ENCODE measurements at regions of chr16 and their contacts with region 1.

Region 1: GRCh38 chr16:56317998-56318826 is 107.1 kb downstream of the AMFR start:
- DNase-seq: peak; percentile 51
- ATAC-seq: peak; percentile 99
- H3K4me3 ChIP-seq: no peak overlapping the region
- H3K27ac ChIP-seq: no peak overlapping the region
- H3K4me1 ChIP-seq: peaks cover 4 to 5% of the 10 kb centered on the region in 2 experiments
- H3K27me3 ChIP-seq: no peaks in the 10 kb centered on the region
- CTCF ChIP-seq: peak; percentile 74 to 91 (median 86)
- POLR2A ChIP-seq: no peak
- RAD21 ChIP-seq: peak; percentile 92

Region 2: DNA sequence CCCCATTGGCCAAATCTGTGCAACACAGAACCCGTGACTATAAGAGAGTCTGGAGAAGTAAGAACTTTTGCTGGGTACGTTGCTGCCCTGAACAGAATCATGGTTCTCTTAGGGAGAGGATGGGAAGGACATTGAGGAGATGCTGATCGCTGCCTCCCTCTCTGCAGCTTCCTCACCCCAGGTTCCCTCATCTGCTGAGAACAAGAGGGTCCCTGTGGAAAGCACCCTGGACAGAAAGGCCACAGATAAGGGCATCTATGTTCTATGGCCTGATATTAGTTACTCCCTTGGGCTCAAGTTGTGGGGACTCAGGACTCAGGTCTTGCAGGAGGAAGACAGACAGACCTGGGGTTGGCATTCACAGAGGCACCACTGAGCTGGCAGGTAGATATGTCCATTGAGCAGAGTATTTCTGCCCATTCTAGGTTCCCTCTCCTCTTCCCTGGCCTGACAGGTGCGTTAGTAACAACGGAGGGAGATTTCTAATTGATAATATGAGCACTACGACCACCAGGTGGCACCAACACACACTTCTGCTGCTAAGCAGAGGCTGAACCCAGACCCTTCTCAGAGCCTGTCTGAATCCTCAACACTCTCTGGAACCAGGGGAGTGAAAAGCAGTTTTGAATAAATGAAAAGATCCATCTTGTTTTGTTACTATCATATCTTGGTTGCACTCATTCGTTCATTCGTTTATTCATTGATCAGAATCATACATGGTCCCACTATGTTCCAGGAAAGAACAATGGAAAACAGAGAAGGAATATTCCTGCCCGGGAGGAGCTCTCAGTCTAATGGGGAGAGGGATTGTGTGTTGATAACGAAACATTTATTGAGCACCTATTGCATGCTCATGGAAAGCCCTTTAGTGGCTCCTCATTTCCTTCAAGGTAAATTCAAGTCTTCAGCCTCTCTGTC is 606.0 kb before region 1 on chr16:
- CTCF ChIA-PET with region 1: interaction called, 4 read pairs
- POLR2A ChIA-PET with region 1: no interaction called
- RAD21 ChIA-PET with region 1: no interaction called
- intact Hi-C with region 1: loop called (anchors 1 kb)
- DNase-seq: peak; percentile 31
- ATAC-seq: peak; percentile 92
- H3K4me3 ChIP-seq: no peak overlapping the region
- H3K27ac ChIP-seq: no peak overlapping the region
- H3K4me1 ChIP-seq: no peaks in the 10 kb centered on the region
- H3K27me3 ChIP-seq: peaks cover 47% of the 10 kb centered on the region
- CTCF ChIP-seq: peak; percentile 47 to 68 (median 54); a peak in 5 of 6 replicates
- POLR2A ChIP-seq: no peak
- RAD21 ChIP-seq: peak; percentile 71

Region 3: GRCh38 chr16:55944377-55944802 is 373.8 kb before region 1 on chr16:
- CTCF ChIA-PET with region 1: interaction called, 17 read pairs
- POLR2A ChIA-PET with region 1: no interaction called
- RAD21 ChIA-PET with region 1: interaction called in 1 of 2 experiments, 3 read pairs
- intact Hi-C with region 1: loop called (anchors 1 kb)
- DNase-seq: peak; percentile 23
- ATAC-seq: peak; percentile 95
- H3K4me3 ChIP-seq: no peak overlapping the region
- H3K27ac ChIP-seq: no peak overlapping the region
- H3K4me1 ChIP-seq: no peaks in the 10 kb centered on the region
- H3K27me3 ChIP-seq: peaks cover 18% of the 10 kb centered on the region
- CTCF ChIP-seq: peak; percentile 57 to 95 (median 94)
- POLR2A ChIP-seq: no peak
- RAD21 ChIP-seq: peak; percentile 61

Region 4: DNA sequence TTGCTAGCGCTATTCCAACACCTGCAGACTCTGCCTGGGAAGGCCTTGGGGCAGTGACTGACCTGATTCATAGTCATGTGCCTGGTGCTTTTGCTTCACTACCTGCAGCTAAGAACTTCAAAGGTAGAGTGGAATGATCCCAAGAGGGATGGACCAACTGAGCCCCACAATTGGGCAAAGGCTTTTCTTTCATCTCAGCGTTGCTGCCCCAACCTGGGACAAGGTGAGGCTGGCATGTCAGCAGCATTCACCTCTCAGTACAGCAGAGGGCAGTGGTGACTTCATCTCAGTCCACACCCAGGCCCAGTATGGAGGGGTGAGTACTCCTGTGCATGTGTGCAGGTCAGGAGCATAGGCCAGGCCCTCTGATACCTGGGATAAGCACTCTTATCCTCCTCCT is 276.5 kb before region 1 on chr16:
- CTCF ChIA-PET with region 1: interaction called, 10 read pairs
- POLR2A ChIA-PET with region 1: no interaction called
- RAD21 ChIA-PET with region 1: no interaction called
- intact Hi-C with region 1: loop called (anchors 1 kb)
- DNase-seq: peak; percentile 7
- ATAC-seq: peak; percentile 98
- H3K4me3 ChIP-seq: no peak overlapping the region
- H3K27ac ChIP-seq: no peak overlapping the region
- H3K4me1 ChIP-seq: no peaks in the 10 kb centered on the region
- H3K27me3 ChIP-seq: no peaks in the 10 kb centered on the region
- CTCF ChIP-seq: peak; percentile 41 to 53 (median 52); a peak in 5 of 6 replicates
- POLR2A ChIP-seq: no peak
- RAD21 ChIP-seq: peak; percentile 58

Measured in HCT116 (cell line).